A549 (cell line): ENCODE measurements at regions of chr11 and their contacts with region 1.

Region 1: GRCh38 chr11:63478896-63479295 is 12.1 kb downstream of the PLAAT5 start:
- DNase-seq: peak; percentile 71 to 85
- ATAC-seq: peak; percentile 95
- H3K4me3 ChIP-seq: no peak overlapping the region
- H3K27ac ChIP-seq: peak overlapping the region; percentile 1 to 53; a peak in 2 of 6 replicates
- H3K4me1 ChIP-seq: no peaks in the 10 kb centered on the region; the same call in 2 of the 3 replicates
- CTCF ChIP-seq: peak; percentile 96
- EP300 ChIP-seq: no peak
- POLR2A ChIP-seq: no peak
- RAD21 ChIP-seq: peak; percentile 98 to 100

Region 2: DNA sequence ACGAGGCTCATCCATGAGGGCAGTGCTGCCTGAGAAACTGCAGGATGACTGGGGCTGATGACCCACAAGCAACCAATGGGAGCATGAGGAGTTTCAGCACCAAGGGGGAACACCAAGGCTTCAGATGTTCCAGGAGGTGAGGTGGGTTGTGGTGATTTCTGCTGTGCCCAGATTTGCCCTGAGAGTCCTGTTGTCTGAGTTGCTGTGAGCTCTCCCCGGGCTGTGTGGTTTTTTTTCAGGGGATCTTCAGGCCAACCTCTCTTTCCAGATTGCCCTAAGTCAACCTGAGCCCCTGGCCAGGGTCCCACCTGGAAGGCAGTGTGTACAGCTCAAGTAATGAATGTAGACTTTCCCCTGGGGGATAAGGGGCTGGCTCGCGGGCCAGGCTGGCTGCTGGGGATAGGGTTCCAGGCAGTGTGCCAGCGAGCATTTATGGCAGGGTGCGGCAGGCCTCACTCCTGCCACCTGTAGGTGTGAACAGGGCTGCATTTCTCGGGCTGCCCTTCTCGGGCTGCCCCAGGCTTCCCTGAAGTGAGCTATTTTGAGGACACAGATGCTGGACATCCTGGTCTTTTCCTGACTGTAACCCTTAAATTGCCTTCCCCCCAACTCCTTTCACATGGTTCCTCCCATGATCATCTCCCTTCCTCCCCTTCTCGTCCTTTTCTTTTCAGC is 503.9 kb before region 1 on chr11:
- CTCF ChIA-PET with region 1: no interaction called
- POLR2A ChIA-PET with region 1: no interaction called
- DNase-seq: peak; percentile 38 to 54
- ATAC-seq: peak; percentile 83 to 93
- H3K4me3 ChIP-seq: no peak overlapping the region
- H3K27ac ChIP-seq: no peak overlapping the region
- H3K4me1 ChIP-seq: no peaks in the 10 kb centered on the region
- CTCF ChIP-seq: peak; percentile 47
- EP300 ChIP-seq: no peak
- POLR2A ChIP-seq: no peak
- RAD21 ChIP-seq: peak in 1 of 2 experiments; percentile 15; a peak in 1 of 5 replicates

Region 3: GRCh38 chr11:63490551-63491239 is 11.8 kb after region 1 on chr11 and contains the start of gene PLAAT5:
- CTCF ChIA-PET with region 1: interaction called, 40 read pairs
- POLR2A ChIA-PET with region 1: no interaction called
- DNase-seq: no peak
- ATAC-seq: no peak
- H3K4me3 ChIP-seq: no peak within 1 kb of the TSS
- H3K27ac ChIP-seq: no peak within 1 kb of the TSS
- H3K4me1 ChIP-seq: no peaks in the 10 kb centered on the region
- CTCF ChIP-seq: no peak
- EP300 ChIP-seq: no peak
- POLR2A ChIP-seq: no peak
- RAD21 ChIP-seq: no peak
- polyA plus RNA-seq, gene PLAAT5: 0.12 and 0.25 TPM in 2 replicates

Region 4: GRCh38 chr11:63567044-63567840 is 88.3 kb after region 1 on chr11:
- CTCF ChIA-PET with region 1: interaction called, 12 read pairs
- POLR2A ChIA-PET with region 1: no interaction called
- DNase-seq: peak; percentile 66 to 95
- ATAC-seq: peak; percentile 95 to 97
- H3K4me3 ChIP-seq: no peak overlapping the region
- H3K27ac ChIP-seq: peak overlapping the region; percentile 71 to 85
- H3K4me1 ChIP-seq: peaks cover 39% of the 10 kb centered on the region
- CTCF ChIP-seq: no peak
- EP300 ChIP-seq: no peak
- POLR2A ChIP-seq: no peak
- RAD21 ChIP-seq: no peak

Region 5: GRCh38 chr11:63621931-63622782 is 143.3 kb after region 1 on chr11:
- CTCF ChIA-PET with region 1: interaction called, 57 read pairs
- POLR2A ChIA-PET with region 1: no interaction called
- DNase-seq: peak; percentile 35 to 51
- ATAC-seq: peak; percentile 58 to 61; a peak in 5 of 6 replicates
- H3K4me3 ChIP-seq: no peak overlapping the region
- H3K27ac ChIP-seq: no peak overlapping the region
- H3K4me1 ChIP-seq: peaks cover 19% of the 10 kb centered on the region
- CTCF ChIP-seq: no peak
- EP300 ChIP-seq: no peak
- POLR2A ChIP-seq: no peak
- RAD21 ChIP-seq: no peak

Region 6: GRCh38 chr11:63635762-63636465 is 157.0 kb after region 1 on chr11:
- CTCF ChIA-PET with region 1: interaction called, 128 read pairs
- POLR2A ChIA-PET with region 1: no interaction called
- DNase-seq: peak; percentile 70 to 81
- ATAC-seq: peak; percentile 88
- H3K4me3 ChIP-seq: no peak overlapping the region
- H3K27ac ChIP-seq: 0 out of 6 replicates have a peak overlapping the region, but pooled peaks of 1 of the 2 experiments have one; percentile 10
- H3K4me1 ChIP-seq: peaks cover 17% of the 10 kb centered on the region
- CTCF ChIP-seq: peak; percentile 91
- EP300 ChIP-seq: no peak
- POLR2A ChIP-seq: no peak
- RAD21 ChIP-seq: peak; percentile 91 to 93

Region 7: DNA sequence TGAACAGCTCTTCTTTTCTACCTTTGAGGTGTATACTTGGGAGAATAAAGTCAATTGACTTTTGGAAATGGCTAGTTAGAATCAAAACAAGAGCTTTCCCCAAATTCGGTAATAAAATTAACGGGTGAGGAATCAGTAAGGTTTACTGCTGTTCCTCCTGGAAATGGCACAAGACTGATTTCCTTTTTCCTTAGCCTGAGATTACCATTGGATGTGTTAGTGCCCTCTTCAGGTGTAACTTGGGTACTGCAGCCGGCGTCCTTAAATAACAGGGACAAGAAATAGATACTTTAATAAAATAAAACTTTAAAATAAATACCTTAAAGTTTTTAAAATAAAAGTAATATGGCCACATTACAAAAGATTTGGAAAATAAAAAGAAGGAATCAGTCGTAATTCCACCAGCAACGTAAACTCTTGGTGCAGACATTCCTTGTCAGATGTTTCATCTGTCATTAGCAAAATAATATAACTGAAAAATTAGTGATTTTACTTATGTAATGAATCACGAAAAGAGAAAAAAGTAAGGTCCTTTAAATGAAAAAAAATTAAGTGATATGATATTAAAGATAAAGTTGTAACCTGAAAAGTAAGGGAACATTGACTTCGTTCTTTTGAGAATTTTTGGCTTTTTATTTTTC is 259.9 kb after region 1 on chr11:
- CTCF ChIA-PET with region 1: interaction called, 17 read pairs
- POLR2A ChIA-PET with region 1: no interaction called
- DNase-seq: peak; percentile 35 to 83
- ATAC-seq: peak; percentile 50 to 75; a peak in 4 of 6 replicates
- H3K4me3 ChIP-seq: no peak overlapping the region
- H3K27ac ChIP-seq: no peak overlapping the region
- H3K4me1 ChIP-seq: peaks cover 5% of the 10 kb centered on the region; the same call in 1 of the 3 replicates
- CTCF ChIP-seq: peak; percentile 90
- EP300 ChIP-seq: no peak
- POLR2A ChIP-seq: no peak
- RAD21 ChIP-seq: peak; percentile 71 to 81

Region 8: GRCh38 chr11:63756919-63757761 is 278.2 kb after region 1 on chr11:
- CTCF ChIA-PET with region 1: no interaction called
- POLR2A ChIA-PET with region 1: no interaction called
- DNase-seq: no peak
- ATAC-seq: no peak
- H3K4me3 ChIP-seq: no peak overlapping the region
- H3K27ac ChIP-seq: no peak overlapping the region
- H3K4me1 ChIP-seq: no peaks in the 10 kb centered on the region
- CTCF ChIP-seq: no peak
- EP300 ChIP-seq: no peak
- POLR2A ChIP-seq: no peak
- RAD21 ChIP-seq: no peak